Left colon (tissue), 2 donors: ENCODE measurements at regions of chr6 and their contacts with region 1.

Region 1: DNA sequence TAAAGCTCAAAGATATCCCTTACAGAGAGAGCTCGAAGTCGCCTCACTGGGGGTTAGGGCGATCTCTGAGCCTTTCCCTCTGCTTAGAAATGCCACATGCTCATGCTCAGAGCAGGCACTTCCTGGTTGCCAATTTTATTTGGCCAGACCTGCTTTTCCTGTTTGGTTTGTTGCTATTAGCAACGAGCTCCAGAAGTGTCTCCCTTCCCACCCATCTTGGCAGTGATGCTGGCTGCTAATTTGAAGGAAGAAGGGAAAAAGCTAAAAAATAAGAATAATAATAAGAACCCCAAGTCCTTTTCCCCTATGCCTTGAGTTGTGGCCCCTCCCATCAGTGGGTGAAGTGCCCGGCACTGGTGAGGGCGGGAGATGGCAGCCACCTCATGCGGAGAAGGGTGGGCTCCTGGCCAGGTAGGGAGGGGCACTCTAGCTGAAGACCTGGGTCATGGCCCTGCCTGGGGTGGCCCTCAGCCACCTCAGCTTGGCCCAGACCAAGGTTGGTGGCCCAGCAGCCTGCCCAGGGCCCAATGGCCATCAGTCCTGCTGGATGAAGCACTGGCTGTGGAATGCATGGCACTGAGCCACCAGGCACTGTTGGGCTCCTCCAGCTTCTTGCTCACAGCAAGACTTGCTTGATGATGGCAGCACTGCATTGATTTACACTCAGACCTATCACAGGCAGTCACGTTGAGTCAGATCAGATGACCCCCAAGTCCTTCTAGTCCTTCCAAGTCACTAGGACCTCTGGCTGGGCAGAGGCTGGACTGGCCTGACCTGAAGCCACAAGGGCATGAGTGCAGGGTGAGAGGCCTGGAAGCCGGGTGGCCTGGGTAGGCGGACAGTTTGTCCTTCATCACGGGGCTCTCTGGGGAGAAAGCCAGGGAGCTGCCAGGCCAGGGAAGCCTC is 79.0 kb downstream of the SYNJ2 start:
- DNase-seq: peak; percentile 50 to 75
- ATAC-seq: peak; percentile 91

Region 2: GRCh38 chr6:157764178-157765033 is 296.3 kb before region 1 on chr6:
- intact Hi-C with region 1: loop called in 1 of 2 experiments (anchors 10 kb)
- DNase-seq: peak; percentile 77 to 89
- ATAC-seq: peak; percentile 68

Region 3: GRCh38 chr6:158009114-158009891 is 51.4 kb before region 1 on chr6:
- intact Hi-C with region 1: loop called in 1 of 2 experiments (anchors 10 kb)
- DNase-seq: peak in 1 of 2 donors; percentile 48
- ATAC-seq: no peak

Region 4: DNA sequence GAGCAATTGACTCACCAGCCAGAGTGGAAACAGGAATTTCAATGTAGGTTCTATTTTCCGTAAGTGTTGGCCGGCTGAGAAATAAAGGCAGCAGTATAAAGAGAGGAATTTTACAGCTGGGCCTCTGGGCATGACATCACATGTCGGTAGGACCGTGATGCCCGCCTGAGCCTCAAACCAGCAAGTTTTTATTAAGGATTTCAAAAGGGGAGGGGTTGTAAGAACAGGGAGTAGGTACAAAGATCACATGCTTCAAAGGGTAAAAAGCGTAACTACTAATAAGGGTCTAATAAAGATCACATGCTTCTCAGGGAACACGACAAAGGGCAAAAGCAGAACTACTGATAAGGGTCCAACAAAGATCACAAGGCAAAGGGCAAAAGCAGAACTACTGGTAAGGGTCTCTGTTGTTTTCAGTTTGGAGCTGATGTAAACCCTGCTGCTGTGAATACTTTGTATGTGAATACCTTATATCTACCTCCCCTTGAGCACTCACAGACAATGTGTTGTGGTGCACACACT is 242.6 kb after region 1 on chr6:
- intact Hi-C with region 1: no loop called
- DNase-seq: no peak
- ATAC-seq: no peak